Tibial artery (tissue), 4 donors: ENCODE measurements at regions of chr15 and their contacts with region 1.

Region 1: DNA sequence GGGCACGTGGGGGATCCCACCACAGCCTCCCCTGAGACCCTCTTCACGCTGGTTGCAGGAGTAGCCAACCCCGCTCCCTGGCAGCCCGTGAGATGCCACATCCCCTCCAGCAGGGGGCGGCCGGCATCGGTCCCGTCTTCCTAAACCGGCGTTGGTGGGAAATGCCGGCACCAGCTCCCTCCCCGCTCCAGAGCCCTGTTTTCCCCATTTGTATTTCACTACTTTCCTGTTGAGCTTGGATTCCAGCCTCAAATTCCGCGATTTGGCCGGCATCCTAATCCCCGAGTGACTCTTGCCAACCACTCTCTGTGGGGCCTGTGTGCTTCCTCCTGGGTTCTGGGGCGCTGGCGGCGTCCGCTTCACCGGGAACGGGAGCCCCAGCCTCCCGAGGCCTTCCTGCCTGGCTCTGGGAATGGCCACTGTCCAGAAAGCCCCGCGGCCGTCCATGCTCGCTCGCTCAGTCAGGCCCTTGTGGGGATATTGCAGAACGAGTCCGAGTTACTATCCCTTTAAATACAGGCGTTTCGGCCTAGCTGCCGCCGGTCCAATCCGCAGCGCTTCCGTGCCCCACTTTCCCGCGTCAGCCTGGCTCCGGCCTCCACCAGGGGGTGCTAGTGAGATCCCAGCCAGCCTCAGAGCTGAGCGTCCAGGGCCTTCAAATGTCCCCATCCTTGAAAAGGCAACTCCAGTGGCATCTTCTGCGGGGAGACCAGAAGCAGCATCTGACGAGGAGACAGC is 8.1 kb upstream of the ADAMTS17 start:
- DNase-seq: peak; percentile 93 to 98
- H3K4me3 ChIP-seq: peak overlapping the region; percentile 70 to 73
- H3K27ac ChIP-seq: peak overlapping the region; percentile 94 to 99
- H3K4me1 ChIP-seq: peaks cover 0 to 16% (median 9%) of the 10 kb centered on the region in 4 donors
- H3K27me3 ChIP-seq: peaks cover 0 to 6% of the 10 kb centered on the region in 2 donors
- CTCF ChIP-seq: peak; percentile 85 to 95

Region 2: GRCh38 chr15:100111103-100112060 is 238.5 kb before region 1 on chr15:
- intact Hi-C with region 1: loop called (anchors 10 kb)
- DNase-seq: peak; percentile 79 to 91
- H3K4me3 ChIP-seq: no peak overlapping the region
- H3K27ac ChIP-seq: peak overlapping the region; percentile 83 to 84
- H3K4me1 ChIP-seq: peaks cover 0 to 54% (median 47%) of the 10 kb centered on the region in 4 donors
- H3K27me3 ChIP-seq: no peaks in the 10 kb centered on the region
- CTCF ChIP-seq: no peak

Region 3: DNA sequence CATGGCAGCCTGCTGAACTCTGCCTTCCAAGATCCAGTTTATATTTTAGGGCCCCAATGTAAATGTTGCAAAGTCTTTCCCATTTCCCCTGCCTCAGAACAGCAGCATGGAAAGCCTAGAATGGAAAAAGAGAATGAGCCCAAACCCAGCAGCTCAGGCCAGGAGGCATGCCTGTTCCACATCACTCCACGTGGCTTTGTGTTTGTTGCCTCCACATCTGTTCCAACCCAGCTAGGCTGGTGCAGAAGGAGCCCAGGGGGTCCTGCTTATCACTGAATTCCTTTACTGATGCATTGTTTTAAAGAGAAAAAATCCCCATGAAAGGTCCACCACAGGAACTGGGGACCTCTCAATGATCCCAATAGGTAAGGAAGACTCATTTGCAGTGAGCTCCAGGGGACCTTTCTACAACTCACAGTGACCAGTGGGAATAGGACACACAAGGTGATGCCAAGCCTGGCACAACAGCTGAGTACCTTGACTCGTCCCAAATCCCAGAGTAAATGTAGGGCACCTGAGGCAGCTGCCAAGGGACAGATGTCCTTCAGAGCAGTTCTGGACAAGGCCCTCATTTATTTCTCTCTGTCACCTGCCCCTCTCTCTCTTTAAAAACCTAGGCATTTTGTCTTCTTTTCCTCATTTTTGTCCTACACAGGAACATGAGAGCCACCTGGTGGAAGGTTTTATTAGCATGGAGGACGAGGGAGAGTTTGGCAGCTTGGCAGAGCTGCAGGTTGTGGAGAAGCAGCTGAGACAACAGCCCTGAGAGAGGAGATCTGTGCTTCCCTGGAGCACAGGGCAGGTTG is 33.6 kb after region 1 on chr15:
- intact Hi-C with region 1: loop called (anchors 5 kb)
- DNase-seq: no peak
- H3K4me3 ChIP-seq: no peak overlapping the region
- H3K27ac ChIP-seq: no peak overlapping the region
- H3K4me1 ChIP-seq: no peaks in the 10 kb centered on the region
- H3K27me3 ChIP-seq: peaks cover 0 to 5% of the 10 kb centered on the region in 2 donors
- CTCF ChIP-seq: peak; percentile 41 to 50

Region 4: GRCh38 chr15:100602064-100602822 is 252.4 kb after region 1 on chr15 and contains the starts of genes ASB7 and LINS1:
- intact Hi-C with region 1: loop called (anchors 5 kb)
- DNase-seq: peak; percentile 100
- H3K4me3 ChIP-seq: peak within 1 kb of the TSS; percentile 71 to 77
- H3K27ac ChIP-seq: peak within 1 kb of the TSS; percentile 82 to 87
- H3K4me1 ChIP-seq: peaks cover 0 to 41% (median 28%) of the 10 kb centered on the region in 4 donors
- H3K27me3 ChIP-seq: no peaks in the 10 kb centered on the region
- CTCF ChIP-seq: no peak